Caco-2 (cell line): ENCODE measurements at regions of chr2 and their contacts with region 1.

Region 1: DNA sequence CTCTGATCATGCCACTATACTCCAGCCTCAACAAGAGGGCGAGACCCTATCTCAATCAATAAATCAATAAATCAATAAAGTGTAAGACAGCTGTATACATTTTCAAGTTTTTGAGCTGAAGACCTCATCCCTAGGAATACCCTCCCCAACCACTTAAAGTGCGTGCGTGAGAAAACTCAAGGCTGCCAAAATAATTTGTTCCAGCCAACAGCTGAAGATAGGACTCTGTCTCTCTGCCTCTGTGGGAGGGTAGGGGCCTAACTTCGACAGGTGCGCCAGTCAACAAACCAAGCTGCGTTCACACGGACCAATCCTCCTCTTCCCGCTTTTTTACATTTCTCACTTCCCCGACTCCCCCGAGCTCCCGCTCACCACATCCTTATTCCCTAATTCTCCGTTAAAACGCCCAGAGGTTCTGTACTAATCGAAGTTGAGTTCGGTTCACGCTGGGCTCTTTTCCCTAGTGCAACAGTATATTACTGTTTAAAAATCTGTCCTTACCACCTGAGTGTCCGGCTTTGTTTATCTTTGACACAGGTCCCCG is 618 bp downstream of the POLR2D start:
- DNase-seq: peak; percentile 42 to 46
- H3K4me3 ChIP-seq: peak overlapping the region; percentile 98
- H3K4me3 Mint-ChIP-seq: peak overlapping the region; percentile 80
- H3K27ac Mint-ChIP-seq: peak overlapping the region; percentile 20
- H3K4me1 ChIP-seq: peaks cover 13% of the 10 kb centered on the region
- H3K4me1 Mint-ChIP-seq: peaks cover 8% of the 10 kb centered on the region
- H3K27me3 ChIP-seq: no peaks in the 10 kb centered on the region
- H3K27me3 Mint-ChIP-seq: no peaks in the 10 kb centered on the region
- CTCF ChIP-seq: no peak

Region 2: DNA sequence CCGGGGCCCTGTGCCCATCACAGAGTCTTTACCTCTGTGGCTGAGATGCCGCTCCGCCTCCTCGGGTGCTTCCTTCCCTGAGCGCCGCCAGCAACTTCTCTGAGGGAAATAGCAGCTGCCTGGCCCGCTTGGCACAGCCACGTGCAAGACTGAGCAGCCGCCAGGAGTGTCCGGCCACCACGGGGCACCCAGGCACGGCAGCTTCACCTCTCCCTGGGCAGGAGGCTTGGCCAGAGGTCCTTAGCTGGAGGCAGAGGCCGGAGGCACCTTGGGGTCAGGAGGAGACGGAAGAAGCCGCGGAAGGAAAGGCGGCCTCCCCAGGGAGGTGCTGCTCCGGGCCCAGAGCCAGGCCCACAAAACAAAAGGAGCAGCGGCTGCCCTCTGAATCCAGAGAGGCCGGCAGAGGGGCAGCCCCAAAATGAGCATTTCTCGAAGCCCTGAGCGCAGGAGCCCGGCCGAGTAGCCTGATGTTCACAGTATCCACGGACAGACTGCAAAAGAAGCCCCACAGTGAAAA is 176.0 kb before region 1 on chr2:
- CTCF ChIA-PET with region 1: no interaction called
- POLR2A ChIA-PET with region 1: no interaction called
- intact Hi-C with region 1: no loop called
- DNase-seq: no peak
- H3K4me3 ChIP-seq: no peak overlapping the region
- H3K4me3 Mint-ChIP-seq: no peak overlapping the region
- H3K27ac Mint-ChIP-seq: no peak overlapping the region
- H3K4me1 ChIP-seq: no peaks in the 10 kb centered on the region
- H3K4me1 Mint-ChIP-seq: no peaks in the 10 kb centered on the region
- H3K27me3 ChIP-seq: 0 out of 2 replicates have a peak, but pooled peaks cover 1% of the 10 kb centered on the region
- H3K27me3 Mint-ChIP-seq: peaks cover 8% of the 10 kb centered on the region
- CTCF ChIP-seq: no peak

Region 3: DNA sequence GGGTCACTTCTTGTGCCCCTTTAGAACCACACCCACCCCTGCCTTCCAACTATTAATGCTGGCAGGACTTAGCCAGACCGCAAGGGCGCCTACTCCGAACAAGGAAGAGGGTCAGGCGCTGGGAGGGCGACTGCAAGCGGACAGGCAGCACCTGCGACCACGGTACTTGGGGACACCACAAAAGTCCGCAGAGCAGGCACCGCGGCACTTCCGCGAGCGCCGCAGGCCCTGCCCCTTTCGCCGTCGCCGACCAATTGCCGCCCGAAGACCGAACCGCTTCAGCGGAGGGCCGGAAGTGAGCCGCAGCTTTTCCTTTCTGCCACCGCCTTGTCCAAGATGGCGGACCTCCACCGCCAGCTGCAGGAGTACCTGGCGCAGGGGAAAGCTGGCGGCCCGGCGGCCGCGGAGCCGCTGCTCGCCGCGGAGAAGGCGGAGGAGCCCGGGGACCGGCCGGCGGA is 156.1 kb before region 1 on chr2 and contains the start of gene SFT2D3:
- CTCF ChIA-PET with region 1: no interaction called
- POLR2A ChIA-PET with region 1: no interaction called
- intact Hi-C with region 1: loop called (anchors 2 kb)
- DNase-seq: peak; percentile 95 to 96
- H3K4me3 ChIP-seq: peak within 1 kb of the TSS; percentile 51
- H3K4me3 Mint-ChIP-seq: peak within 1 kb of the TSS; percentile 98
- H3K27ac Mint-ChIP-seq: peak within 1 kb of the TSS; percentile 99
- H3K4me1 ChIP-seq: peaks cover 10% of the 10 kb centered on the region
- H3K4me1 Mint-ChIP-seq: peaks cover 16% of the 10 kb centered on the region
- H3K27me3 ChIP-seq: no peaks in the 10 kb centered on the region
- H3K27me3 Mint-ChIP-seq: no peaks in the 10 kb centered on the region
- CTCF ChIP-seq: no peak
- total RNA-seq, gene SFT2D3: 12.0 and 12.2 TPM in 2 replicates

Region 4: GRCh38 chr2:127810619-127811396 is 46.5 kb before region 1 on chr2 and contains the start of gene WDR33:
- CTCF ChIA-PET with region 1: no interaction called
- POLR2A ChIA-PET with region 1: interaction called, 6 read pairs
- intact Hi-C with region 1: loop called (anchors 2 kb)
- DNase-seq: peak; percentile 95
- H3K4me3 ChIP-seq: peak within 1 kb of the TSS; percentile 81
- H3K4me3 Mint-ChIP-seq: peak within 1 kb of the TSS; percentile 91
- H3K27ac Mint-ChIP-seq: peak within 1 kb of the TSS; percentile 99
- H3K4me1 ChIP-seq: peaks cover 27% of the 10 kb centered on the region
- H3K4me1 Mint-ChIP-seq: peaks cover 13% of the 10 kb centered on the region
- H3K27me3 ChIP-seq: no peaks in the 10 kb centered on the region
- H3K27me3 Mint-ChIP-seq: no peaks in the 10 kb centered on the region
- CTCF ChIP-seq: peak in 1 of 2 experiments; percentile 0
- total RNA-seq, gene WDR33: 74.9 and 77.5 TPM in 2 replicates

Region 5: GRCh38 chr2:127906206-127906926 is 49.0 kb after region 1 on chr2:
- CTCF ChIA-PET with region 1: no interaction called
- POLR2A ChIA-PET with region 1: no interaction called
- intact Hi-C with region 1: loop called (anchors 1 kb)
- DNase-seq: no peak
- H3K4me3 ChIP-seq: no peak overlapping the region
- H3K4me3 Mint-ChIP-seq: no peak overlapping the region
- H3K27ac Mint-ChIP-seq: peak overlapping the region; percentile 79
- H3K4me1 ChIP-seq: peaks cover 18% of the 10 kb centered on the region
- H3K4me1 Mint-ChIP-seq: peaks cover 14% of the 10 kb centered on the region
- H3K27me3 ChIP-seq: no peaks in the 10 kb centered on the region
- H3K27me3 Mint-ChIP-seq: no peaks in the 10 kb centered on the region
- CTCF ChIP-seq: no peak

Region 6: DNA sequence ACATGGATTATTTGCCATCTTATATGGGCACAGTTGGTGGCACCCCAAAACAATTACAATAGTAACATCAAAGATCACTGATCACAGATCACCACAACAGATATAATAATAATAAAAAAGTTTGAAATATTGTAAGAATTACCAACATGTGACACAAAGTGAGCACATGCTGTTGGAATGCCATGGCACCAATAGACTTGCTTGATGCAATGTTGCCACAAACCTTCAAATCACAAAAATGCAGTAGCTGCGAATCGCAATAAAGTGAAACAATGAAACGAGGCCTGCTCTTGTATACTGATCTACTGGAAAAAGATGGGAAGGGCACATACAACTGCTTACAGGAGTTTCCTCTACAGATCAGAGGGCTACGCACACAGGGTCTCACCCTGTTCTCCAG is 60.6 kb after region 1 on chr2:
- CTCF ChIA-PET with region 1: no interaction called
- POLR2A ChIA-PET with region 1: no interaction called
- intact Hi-C with region 1: no loop called
- DNase-seq: no peak
- H3K4me3 ChIP-seq: no peak overlapping the region
- H3K4me3 Mint-ChIP-seq: no peak overlapping the region
- H3K27ac Mint-ChIP-seq: no peak overlapping the region
- H3K4me1 ChIP-seq: peaks cover 9% of the 10 kb centered on the region
- H3K4me1 Mint-ChIP-seq: peaks cover 7% of the 10 kb centered on the region
- H3K27me3 ChIP-seq: no peaks in the 10 kb centered on the region
- H3K27me3 Mint-ChIP-seq: no peaks in the 10 kb centered on the region
- CTCF ChIP-seq: no peak

Region 7: GRCh38 chr2:128027801-128028667 is 170.7 kb after region 1 on chr2 and contains the start of gene SAP130:
- CTCF ChIA-PET with region 1: no interaction called
- POLR2A ChIA-PET with region 1: no interaction called
- intact Hi-C with region 1: loop called (anchors 2 kb)
- DNase-seq: peak; percentile 98 to 99
- H3K4me3 ChIP-seq: peak within 1 kb of the TSS; percentile 97
- H3K4me3 Mint-ChIP-seq: peak within 1 kb of the TSS; percentile 75
- H3K27ac Mint-ChIP-seq: peak within 1 kb of the TSS; percentile 80
- H3K4me1 ChIP-seq: peaks cover 5% of the 10 kb centered on the region; the same call in 1 of the 2 replicates
- H3K4me1 Mint-ChIP-seq: peaks cover 8% of the 10 kb centered on the region
- H3K27me3 ChIP-seq: no peaks in the 10 kb centered on the region
- H3K27me3 Mint-ChIP-seq: no peaks in the 10 kb centered on the region
- CTCF ChIP-seq: no peak
- total RNA-seq, gene SAP130: 41.0 and 43.3 TPM in 2 replicates

Region 8: GRCh38 chr2:128090945-128091725 is 233.8 kb after region 1 on chr2 and contains the start of gene UGGT1:
- CTCF ChIA-PET with region 1: no interaction called
- POLR2A ChIA-PET with region 1: interaction called, 3 read pairs
- intact Hi-C with region 1: loop called (anchors 2 kb)
- DNase-seq: peak; percentile 96 to 97
- H3K4me3 ChIP-seq: peak within 1 kb of the TSS; percentile 64
- H3K4me3 Mint-ChIP-seq: peak within 1 kb of the TSS; percentile 84
- H3K27ac Mint-ChIP-seq: peak within 1 kb of the TSS; percentile 91
- H3K4me1 ChIP-seq: no peaks in the 10 kb centered on the region
- H3K4me1 Mint-ChIP-seq: no peaks in the 10 kb centered on the region
- H3K27me3 ChIP-seq: no peaks in the 10 kb centered on the region
- H3K27me3 Mint-ChIP-seq: no peaks in the 10 kb centered on the region
- CTCF ChIP-seq: no peak
- total RNA-seq, gene UGGT1: 77.5 and 80.0 TPM in 2 replicates